ENCODE measurements at regions of chr1 and their contacts with region 1.

Region 1: GRCh38 chr1:87084244-87084836 is 169.9 kb downstream of the HS2ST1 start:
- DNase-seq: peak; percentile 6
- ATAC-seq: peak; percentile 50
- H3K4me3 ChIP-seq: no peak overlapping the region
- H3K27ac ChIP-seq: no peak overlapping the region
- H3K4me1 ChIP-seq: no peaks in the 10 kb centered on the region
- H3K27me3 ChIP-seq: no peaks in the 10 kb centered on the region
- CTCF ChIP-seq: peak; percentile 14 to 51 (median 36); a peak in 3 of 6 replicates
- POLR2A ChIP-seq: no peak
- RAD21 ChIP-seq: peak; percentile 67

Region 2: GRCh38 chr1:86380257-86380861 is 704.0 kb before region 1 on chr1:
- CTCF ChIA-PET with region 1: no interaction called
- POLR2A ChIA-PET with region 1: no interaction called
- RAD21 ChIA-PET with region 1: no interaction called
- intact Hi-C with region 1: loop called (anchors 10 kb)
- DNase-seq: peak; percentile 71
- ATAC-seq: peak; percentile 61
- H3K4me3 ChIP-seq: no peak overlapping the region
- H3K27ac ChIP-seq: no peak overlapping the region
- H3K4me1 ChIP-seq: no peaks in the 10 kb centered on the region
- H3K27me3 ChIP-seq: no peaks in the 10 kb centered on the region
- CTCF ChIP-seq: peak; percentile 62 to 70 (median 70)
- POLR2A ChIP-seq: no peak
- RAD21 ChIP-seq: peak; percentile 80

Region 3: DNA sequence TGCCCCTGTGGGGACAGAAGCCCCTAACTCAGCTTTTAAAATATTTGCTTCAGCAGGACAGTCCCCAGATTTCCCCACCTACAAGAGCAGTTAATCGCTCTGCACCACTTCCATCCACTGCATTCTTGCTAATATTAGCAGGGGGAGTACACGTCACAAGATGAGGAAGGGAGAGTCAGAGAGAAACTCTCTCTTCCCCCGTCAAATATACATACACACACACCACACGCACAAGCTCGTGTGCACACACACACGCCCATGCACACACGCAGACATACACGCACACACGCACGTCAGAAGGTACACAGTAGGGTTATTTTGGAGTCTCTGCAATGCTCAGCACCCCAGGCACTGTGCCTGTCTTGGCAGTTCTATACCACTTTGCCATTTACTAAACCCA is 613.5 kb before region 1 on chr1:
- CTCF ChIA-PET with region 1: interaction called, 4 read pairs
- POLR2A ChIA-PET with region 1: no interaction called
- RAD21 ChIA-PET with region 1: no interaction called
- intact Hi-C with region 1: loop called (anchors 10 kb)
- DNase-seq: no peak
- ATAC-seq: no peak
- H3K4me3 ChIP-seq: no peak overlapping the region
- H3K27ac ChIP-seq: no peak overlapping the region
- H3K4me1 ChIP-seq: no peaks in the 10 kb centered on the region
- H3K27me3 ChIP-seq: no peaks in the 10 kb centered on the region
- CTCF ChIP-seq: no peak
- POLR2A ChIP-seq: no peak
- RAD21 ChIP-seq: no peak

Region 4: GRCh38 chr1:86779308-86780191 is 304.8 kb before region 1 on chr1:
- CTCF ChIA-PET with region 1: interaction called, 28 read pairs
- POLR2A ChIA-PET with region 1: no interaction called
- RAD21 ChIA-PET with region 1: no interaction called
- intact Hi-C with region 1: loop called (anchors 2 kb)
- DNase-seq: no peak
- ATAC-seq: no peak
- H3K4me3 ChIP-seq: no peak overlapping the region
- H3K27ac ChIP-seq: no peak overlapping the region
- H3K4me1 ChIP-seq: peaks cover 10 to 17% of the 10 kb centered on the region in 2 experiments; a peak in 3 of 4 replicates
- H3K27me3 ChIP-seq: no peaks in the 10 kb centered on the region
- CTCF ChIP-seq: no peak
- POLR2A ChIP-seq: no peak
- RAD21 ChIP-seq: no peak

Region 5: DNA sequence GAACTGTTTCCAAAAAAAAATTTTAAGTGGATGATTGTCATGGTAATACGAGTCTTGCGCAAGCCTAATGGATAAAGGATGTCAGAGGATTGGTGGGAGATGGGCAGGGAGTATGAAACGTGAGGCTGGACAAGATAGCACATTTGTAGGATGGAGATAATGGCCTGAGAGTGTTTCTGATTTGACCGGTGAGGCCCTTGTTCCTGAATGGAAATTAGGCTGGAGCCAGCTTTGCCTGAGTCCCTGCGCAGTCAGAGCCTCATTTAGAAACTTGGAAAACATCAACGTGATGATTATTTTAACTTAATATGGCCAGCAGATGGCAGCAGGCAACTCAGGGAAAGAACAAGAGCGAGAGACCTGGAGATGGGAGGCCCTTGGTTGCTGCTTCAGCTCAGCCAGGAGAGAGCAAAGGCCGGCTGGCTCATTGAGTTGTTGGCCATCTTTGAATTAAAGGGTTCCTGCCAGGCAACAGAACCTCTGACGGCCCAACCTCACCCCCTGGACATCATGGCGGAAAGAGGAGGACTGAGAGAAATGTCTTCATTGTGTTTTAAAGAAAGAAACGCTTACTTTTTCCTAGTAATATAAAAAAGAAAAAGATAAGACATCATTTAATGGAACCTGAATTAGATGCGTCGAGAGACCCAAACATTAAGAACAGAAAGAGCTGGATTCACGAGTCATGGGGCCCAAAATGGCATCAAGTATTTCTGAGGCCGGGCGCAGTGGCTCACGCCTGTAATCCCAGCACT is 250.7 kb before region 1 on chr1:
- CTCF ChIA-PET with region 1: interaction called, 27 read pairs
- POLR2A ChIA-PET with region 1: no interaction called
- RAD21 ChIA-PET with region 1: interaction called in 1 of 2 experiments, 3 read pairs
- intact Hi-C with region 1: loop called (anchors 1 kb)
- DNase-seq: peak; percentile 79
- ATAC-seq: peak; percentile 98
- H3K4me3 ChIP-seq: no peak overlapping the region
- H3K27ac ChIP-seq: no peak overlapping the region
- H3K4me1 ChIP-seq: no peaks in the 10 kb centered on the region; a peak in 1 of 4 replicates
- H3K27me3 ChIP-seq: no peaks in the 10 kb centered on the region
- CTCF ChIP-seq: peak; percentile 43 to 80 (median 66)
- POLR2A ChIP-seq: no peak
- RAD21 ChIP-seq: peak; percentile 85

Region 6: DNA sequence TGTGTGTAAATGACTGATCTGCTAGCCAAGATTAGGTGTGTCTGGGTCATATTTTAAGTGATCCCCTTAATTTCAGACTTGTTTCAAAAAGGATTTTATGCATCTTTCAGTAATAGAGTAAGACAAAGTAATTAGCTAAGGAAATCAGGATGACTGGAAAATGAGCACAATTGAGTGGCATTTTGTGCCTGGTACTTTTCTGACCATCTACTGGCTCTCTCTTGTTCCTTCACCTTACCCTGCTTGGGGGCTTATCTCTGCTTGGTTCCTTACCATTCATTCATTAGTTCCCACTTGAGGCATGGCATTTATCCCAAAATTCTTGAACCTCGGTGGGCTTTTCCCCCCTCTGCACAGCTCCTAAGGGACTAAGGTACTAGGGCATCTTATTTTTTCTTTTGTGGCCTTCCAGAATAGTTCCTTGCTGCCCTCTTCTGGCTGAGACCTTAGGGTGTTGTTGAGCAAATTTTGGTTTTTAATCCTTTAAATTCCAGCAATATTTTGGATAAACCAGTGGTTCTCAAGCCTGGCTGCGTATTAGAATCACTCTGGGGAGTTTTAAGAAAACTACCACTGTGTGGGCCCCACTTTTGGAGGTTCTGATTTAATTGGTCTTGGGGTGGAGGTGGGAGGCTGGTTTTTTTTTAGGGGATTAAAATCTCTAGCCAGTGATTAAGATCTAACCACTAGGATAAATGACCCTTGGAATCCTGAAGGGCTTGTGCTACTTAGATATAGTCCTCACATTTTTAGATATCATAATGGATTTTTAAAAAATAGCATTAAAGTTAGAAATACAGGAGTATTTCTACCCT is 119.1 kb before region 1 on chr1:
- CTCF ChIA-PET with region 1: no interaction called
- POLR2A ChIA-PET with region 1: no interaction called
- RAD21 ChIA-PET with region 1: no interaction called
- intact Hi-C with region 1: loop called (anchors 5 kb)
- DNase-seq: peak; percentile 23
- ATAC-seq: peak; percentile 72
- H3K4me3 ChIP-seq: no peak overlapping the region
- H3K27ac ChIP-seq: no peak overlapping the region
- H3K4me1 ChIP-seq: no peaks in the 10 kb centered on the region
- H3K27me3 ChIP-seq: no peaks in the 10 kb centered on the region
- CTCF ChIP-seq: peak; percentile 54 to 77 (median 72); a peak in 5 of 6 replicates
- POLR2A ChIP-seq: no peak
- RAD21 ChIP-seq: peak; percentile 81

Region 7: GRCh38 chr1:87074001-87074795 is 10.1 kb before region 1 on chr1:
- CTCF ChIA-PET with region 1: interaction called, 19 read pairs
- POLR2A ChIA-PET with region 1: no interaction called
- RAD21 ChIA-PET with region 1: no interaction called
- intact Hi-C with region 1: no loop called
- DNase-seq: no peak
- ATAC-seq: no peak
- H3K4me3 ChIP-seq: no peak overlapping the region
- H3K27ac ChIP-seq: no peak overlapping the region
- H3K4me1 ChIP-seq: peaks cover 2 to 8% of the 10 kb centered on the region in 2 experiments; a peak in 2 of 4 replicates
- H3K27me3 ChIP-seq: no peaks in the 10 kb centered on the region
- CTCF ChIP-seq: no peak
- POLR2A ChIP-seq: no peak
- RAD21 ChIP-seq: no peak

Measured in HCT116 (cell line).